Left ventricle myocardium inferior (tissue), 1 donor: ENCODE measurements at regions of chr6 and their contacts with region 1.

Region 1: GRCh38 chr6:108558372-108559096 is 2.2 kb upstream of the FOXO3 start:
- DNase-seq: peak; percentile 98
- H3K4me3 ChIP-seq: peak overlapping the region; percentile 88
- H3K27ac ChIP-seq: peak overlapping the region; percentile 98
- H3K4me1 ChIP-seq: peaks cover 56% of the 10 kb centered on the region
- H3K27me3 ChIP-seq: no peaks in the 10 kb centered on the region
- CTCF ChIP-seq: no peak

Region 2: DNA sequence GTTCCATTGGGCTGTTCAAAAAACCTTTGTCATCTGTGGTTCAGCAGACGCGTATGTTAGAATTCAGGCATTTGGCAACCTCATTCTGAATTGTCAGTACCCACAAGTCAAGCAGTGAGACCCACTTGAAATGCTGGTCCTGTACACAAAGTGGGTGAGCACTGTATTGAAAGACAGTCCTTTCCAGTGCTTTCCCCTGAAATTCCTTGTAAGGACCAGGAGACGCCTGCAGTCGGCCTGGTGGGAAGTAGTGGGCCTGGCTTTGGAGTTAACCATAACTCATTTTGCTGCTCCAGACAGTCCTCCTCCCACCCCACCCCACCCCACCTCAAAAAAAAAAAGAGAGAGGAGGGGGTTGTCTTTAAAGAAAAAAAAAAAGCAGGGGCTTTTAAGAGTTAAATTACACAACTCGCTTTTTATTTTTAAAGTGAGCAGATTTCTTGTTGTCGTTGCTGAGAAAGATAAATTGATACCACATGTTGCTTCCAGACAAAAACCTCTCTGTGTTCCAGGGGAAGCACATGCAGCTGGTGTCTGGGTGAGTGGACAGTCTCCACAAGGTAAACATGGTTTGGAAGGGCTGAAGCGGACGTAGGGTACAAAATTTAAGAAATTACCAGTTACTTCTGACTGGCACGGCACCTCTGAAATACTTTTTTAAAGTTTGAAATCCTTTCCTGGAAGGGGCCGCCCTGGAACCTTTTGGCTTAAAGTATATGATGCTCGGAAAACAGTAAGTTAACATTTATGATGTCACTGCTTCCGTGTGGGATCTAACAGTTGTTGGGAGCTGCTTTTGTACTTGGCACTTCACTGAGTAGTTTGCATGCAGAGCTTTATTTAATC is 97.5 kb after region 1 on chr6:
- intact Hi-C with region 1: loop called (anchors 10 kb)
- DNase-seq: no peak
- H3K4me3 ChIP-seq: peak overlapping the region; percentile 43
- H3K27ac ChIP-seq: peak overlapping the region; percentile 94
- H3K4me1 ChIP-seq: peaks cover 97% of the 10 kb centered on the region
- H3K27me3 ChIP-seq: no peaks in the 10 kb centered on the region
- CTCF ChIP-seq: no peak

Region 3: DNA sequence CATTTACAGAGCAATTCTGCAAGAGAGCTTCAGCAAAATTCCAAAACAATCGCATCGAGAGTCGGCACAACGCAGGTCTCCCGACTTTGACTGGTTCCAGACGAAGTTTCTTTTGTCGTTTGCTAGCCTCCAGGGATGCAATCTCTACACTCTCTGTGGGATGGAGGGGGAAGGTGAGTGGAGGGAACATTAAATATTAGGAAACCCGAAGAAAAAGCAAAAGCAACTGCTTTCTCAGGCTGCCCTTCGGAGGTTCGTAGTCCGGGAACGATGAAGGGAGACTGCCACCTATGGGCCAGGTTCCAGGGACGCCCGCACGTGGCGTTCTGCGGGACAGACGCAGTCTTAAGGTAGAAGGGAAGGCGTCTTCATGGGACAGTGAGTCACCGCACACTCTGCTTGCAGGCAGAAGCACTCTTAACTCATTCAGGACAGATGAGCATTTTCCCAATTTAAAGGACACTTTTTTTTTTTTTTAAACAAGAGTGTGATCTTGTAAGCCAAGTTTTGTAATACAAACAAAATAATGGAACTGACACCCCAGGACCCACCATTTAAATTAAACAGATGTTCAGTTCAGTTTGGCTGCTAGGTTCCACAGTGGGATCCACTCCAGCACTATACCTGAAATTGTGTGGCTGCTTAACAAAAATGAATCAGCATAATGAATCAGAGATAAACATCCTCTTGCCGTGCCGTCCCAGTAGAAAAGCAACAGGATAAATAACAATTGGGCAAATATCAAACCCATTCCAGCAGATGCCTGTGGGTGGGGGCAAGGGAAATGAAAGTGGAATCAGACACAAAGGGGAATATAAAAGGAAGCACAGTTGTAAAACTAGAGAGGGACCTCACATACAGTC is 223.9 kb after region 1 on chr6:
- intact Hi-C with region 1: loop called (anchors 5 kb)
- DNase-seq: peak; percentile 81
- H3K4me3 ChIP-seq: peak overlapping the region; percentile 68
- H3K27ac ChIP-seq: peak overlapping the region; percentile 33
- H3K4me1 ChIP-seq: peaks cover 14% of the 10 kb centered on the region
- H3K27me3 ChIP-seq: no peaks in the 10 kb centered on the region
- CTCF ChIP-seq: peak; percentile 87